ENCODE measurements at regions of chr1 and their contacts with region 1.

Region 1: GRCh38 chr1:21782868-21783678 is at the start of gene USP48:
- DNase-seq: peak; percentile 95 to 96 (median 96)
- H3K4me3 ChIP-seq: peak within 1 kb of the TSS; percentile 94 to 100 (median 96)
- H3K27ac ChIP-seq: peak within 1 kb of the TSS; percentile 99 to 100
- H3K4me1 ChIP-seq: peaks cover 9 to 29% (median 20%) of the 10 kb centered on the region in 4 experiments
- H3K27me3 ChIP-seq: no peaks in the 10 kb centered on the region

Region 2: DNA sequence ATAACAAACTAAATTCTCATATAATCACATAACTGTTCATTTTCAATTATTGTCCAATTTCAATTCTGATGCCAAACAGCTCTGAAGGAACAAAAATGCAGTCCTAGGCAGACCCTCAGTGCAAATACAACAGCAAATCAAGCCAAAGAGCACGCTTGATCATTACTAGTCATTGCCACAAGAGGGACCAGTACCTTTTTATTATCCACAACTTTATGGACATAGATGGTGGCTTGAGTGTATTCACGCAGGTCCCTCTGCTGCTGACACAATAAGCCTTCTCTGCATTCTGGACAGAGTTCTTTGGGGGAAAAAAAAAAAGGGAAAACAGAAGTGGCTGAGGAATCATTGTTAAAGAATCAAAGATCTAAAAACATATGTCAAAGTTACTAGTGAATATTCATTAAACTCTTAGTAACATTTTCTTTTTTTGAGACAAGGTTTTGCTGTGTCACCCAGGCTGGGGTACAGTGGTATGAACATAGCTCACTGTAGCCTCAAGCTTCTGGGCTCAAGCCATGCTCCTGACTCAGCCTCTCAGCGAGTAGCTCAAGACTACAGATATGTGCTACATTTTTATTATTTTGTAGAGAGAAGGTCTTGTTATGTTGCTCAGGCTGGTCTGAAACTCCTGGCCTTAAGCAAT is 79.6 kb before region 1 on chr1:
- CTCF ChIA-PET with region 1: interaction called, 10 read pairs
- POLR2A ChIA-PET with region 1: interaction called, 4 read pairs
- DNase-seq: peak; percentile 66 to 78 (median 75)
- H3K4me3 ChIP-seq: no peak overlapping the region
- H3K27ac ChIP-seq: peak overlapping the region in 1 of 2 experiments; percentile 60
- H3K4me1 ChIP-seq: peaks cover 0 to 3% (median 0%) of the 10 kb centered on the region in 4 experiments
- H3K27me3 ChIP-seq: no peaks in the 10 kb centered on the region

Region 3: DNA sequence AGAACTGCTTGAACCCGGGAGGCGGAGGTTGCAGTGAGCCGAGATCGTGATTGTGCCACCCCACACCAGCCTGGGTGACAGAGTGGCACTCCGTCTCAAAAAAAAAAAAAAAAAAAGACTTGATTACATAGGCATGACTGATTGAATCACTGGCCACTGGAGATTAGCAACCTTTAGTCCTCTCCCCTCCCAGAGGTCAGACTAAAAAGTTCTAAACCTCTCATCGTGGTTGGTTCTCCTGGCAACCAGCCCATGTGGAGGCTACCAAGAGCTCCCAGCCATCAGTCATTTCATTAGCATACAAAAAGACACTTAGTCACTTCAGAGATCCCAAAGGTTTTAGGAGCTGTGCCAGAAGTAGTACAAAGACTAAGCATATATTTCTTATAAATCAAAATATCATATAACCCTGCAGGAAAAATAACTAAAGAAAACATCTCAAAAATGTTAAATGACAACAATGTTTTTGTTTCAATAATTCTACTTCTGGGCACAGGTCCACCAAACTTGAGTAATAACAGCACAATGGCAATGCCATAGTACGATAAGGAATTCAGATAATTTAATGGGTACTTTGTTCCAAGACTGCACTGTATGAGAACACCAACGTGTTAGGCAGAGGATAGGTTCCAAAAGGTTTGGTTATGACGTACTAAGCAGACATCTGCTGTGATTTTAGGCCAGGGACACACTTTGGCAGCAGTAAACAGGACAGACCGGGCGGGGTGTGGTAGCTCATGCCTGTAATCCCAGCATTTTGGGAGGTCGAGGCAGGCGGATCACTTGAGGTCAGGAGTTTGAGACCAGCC is 18.3 kb before region 1 on chr1:
- CTCF ChIA-PET with region 1: interaction called, 11 read pairs
- POLR2A ChIA-PET with region 1: interaction called, 3 read pairs
- DNase-seq: peak in 2 of 3 donors; percentile 49 to 51
- H3K4me3 ChIP-seq: no peak overlapping the region
- H3K27ac ChIP-seq: no peak overlapping the region
- H3K4me1 ChIP-seq: peaks cover 10 to 71% (median 47%) of the 10 kb centered on the region in 4 experiments
- H3K27me3 ChIP-seq: no peaks in the 10 kb centered on the region

Region 4: DNA sequence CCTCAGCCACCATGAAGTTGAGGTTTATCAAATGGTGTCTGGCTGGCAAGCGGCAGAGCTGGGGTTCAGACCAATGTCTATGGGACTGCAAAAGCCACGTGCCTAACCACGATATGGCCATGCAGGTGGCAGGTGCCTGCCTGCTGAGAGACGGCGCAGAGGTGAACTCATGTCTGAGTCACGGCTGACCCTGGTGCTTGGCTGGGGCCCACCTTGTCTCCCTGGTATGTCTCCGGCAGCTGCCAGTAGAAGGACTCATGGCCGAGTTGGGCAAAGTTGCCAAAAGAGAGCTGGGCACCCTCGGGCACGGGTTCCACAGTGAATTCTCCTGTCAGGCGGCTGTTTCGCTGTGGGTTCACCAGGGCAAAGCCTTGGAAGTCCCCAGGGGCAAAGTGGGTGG is 88.9 kb after region 1 on chr1:
- CTCF ChIA-PET with region 1: no interaction called
- POLR2A ChIA-PET with region 1: no interaction called
- DNase-seq: no peak
- H3K4me3 ChIP-seq: no peak overlapping the region
- H3K27ac ChIP-seq: no peak overlapping the region
- H3K4me1 ChIP-seq: no peaks in the 10 kb centered on the region
- H3K27me3 ChIP-seq: no peaks in the 10 kb centered on the region

Region 5: GRCh38 chr1:21946836-21947587 is 163.9 kb after region 1 on chr1:
- CTCF ChIA-PET with region 1: no interaction called
- POLR2A ChIA-PET with region 1: no interaction called
- DNase-seq: peak in 2 of 3 donors; percentile 49 to 58
- H3K4me3 ChIP-seq: no peak overlapping the region
- H3K27ac ChIP-seq: no peak overlapping the region
- H3K4me1 ChIP-seq: peaks cover 0 to 7% (median 6%) of the 10 kb centered on the region in 4 experiments
- H3K27me3 ChIP-seq: no peaks in the 10 kb centered on the region

Region 6: GRCh38 chr1:22142315-22143064 is 359.4 kb after region 1 on chr1:
- CTCF ChIA-PET with region 1: no interaction called
- POLR2A ChIA-PET with region 1: no interaction called
- DNase-seq: peak in 2 of 3 donors; percentile 19 to 34
- H3K4me3 ChIP-seq: peak overlapping the region; percentile 16 to 65 (median 48)
- H3K27ac ChIP-seq: no peak overlapping the region
- H3K4me1 ChIP-seq: peaks cover 0 to 13% (median 9%) of the 10 kb centered on the region in 4 experiments
- H3K27me3 ChIP-seq: peaks cover 0 to 76% (median 40%) of the 10 kb centered on the region in 5 experiments

Measured in common myeloid progenitor, CD34-positive (primary cell).